Breast epithelium (tissue), 4 donors: ENCODE measurements at regions of chr9 and their contacts with region 1.

Region 1: DNA sequence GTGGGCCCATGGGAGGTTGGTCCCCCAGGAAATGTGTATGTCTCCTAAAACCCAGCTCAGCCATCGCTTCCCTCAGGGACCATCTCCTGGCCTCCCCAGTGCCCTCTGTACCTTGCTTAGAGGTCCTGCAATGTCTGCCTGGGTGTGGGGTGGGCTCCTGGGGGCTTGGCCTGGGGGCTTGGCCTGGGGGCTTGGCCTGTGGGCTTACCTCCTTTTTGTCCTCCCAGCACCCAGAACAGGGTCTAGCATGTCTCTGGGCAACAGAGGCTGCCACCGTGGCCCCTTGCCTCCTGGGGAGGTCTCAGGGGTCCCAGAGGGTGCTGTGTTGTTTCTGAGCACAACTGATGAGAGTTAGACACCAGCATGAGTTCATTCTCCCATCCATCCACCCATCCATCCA is 10.7 kb upstream of the VAV2 start:
- DNase-seq: no peak
- H3K4me3 ChIP-seq: no peak overlapping the region
- H3K27ac ChIP-seq: no peak overlapping the region
- H3K4me1 ChIP-seq: no peaks in the 10 kb centered on the region
- H3K27me3 ChIP-seq: no peaks in the 10 kb centered on the region
- CTCF ChIP-seq: no peak
- POLR2A ChIP-seq: no peak

Region 2: GRCh38 chr9:134024828-134025605 is 22.2 kb after region 1 on chr9 and contains the start of gene BRD3OS:
- intact Hi-C with region 1: no loop called
- DNase-seq: peak; percentile 94
- H3K4me3 ChIP-seq: peak within 1 kb of the TSS; percentile 72 to 99 (median 73)
- H3K27ac ChIP-seq: peak within 1 kb of the TSS; percentile 71 to 87
- H3K4me1 ChIP-seq: no peaks in the 10 kb centered on the region
- H3K27me3 ChIP-seq: no peaks in the 10 kb centered on the region
- CTCF ChIP-seq: no peak
- POLR2A ChIP-seq: no peak
- total RNA-seq, gene BRD3OS: 11.1 to 14.4 (median 11.4) TPM

Region 3: DNA sequence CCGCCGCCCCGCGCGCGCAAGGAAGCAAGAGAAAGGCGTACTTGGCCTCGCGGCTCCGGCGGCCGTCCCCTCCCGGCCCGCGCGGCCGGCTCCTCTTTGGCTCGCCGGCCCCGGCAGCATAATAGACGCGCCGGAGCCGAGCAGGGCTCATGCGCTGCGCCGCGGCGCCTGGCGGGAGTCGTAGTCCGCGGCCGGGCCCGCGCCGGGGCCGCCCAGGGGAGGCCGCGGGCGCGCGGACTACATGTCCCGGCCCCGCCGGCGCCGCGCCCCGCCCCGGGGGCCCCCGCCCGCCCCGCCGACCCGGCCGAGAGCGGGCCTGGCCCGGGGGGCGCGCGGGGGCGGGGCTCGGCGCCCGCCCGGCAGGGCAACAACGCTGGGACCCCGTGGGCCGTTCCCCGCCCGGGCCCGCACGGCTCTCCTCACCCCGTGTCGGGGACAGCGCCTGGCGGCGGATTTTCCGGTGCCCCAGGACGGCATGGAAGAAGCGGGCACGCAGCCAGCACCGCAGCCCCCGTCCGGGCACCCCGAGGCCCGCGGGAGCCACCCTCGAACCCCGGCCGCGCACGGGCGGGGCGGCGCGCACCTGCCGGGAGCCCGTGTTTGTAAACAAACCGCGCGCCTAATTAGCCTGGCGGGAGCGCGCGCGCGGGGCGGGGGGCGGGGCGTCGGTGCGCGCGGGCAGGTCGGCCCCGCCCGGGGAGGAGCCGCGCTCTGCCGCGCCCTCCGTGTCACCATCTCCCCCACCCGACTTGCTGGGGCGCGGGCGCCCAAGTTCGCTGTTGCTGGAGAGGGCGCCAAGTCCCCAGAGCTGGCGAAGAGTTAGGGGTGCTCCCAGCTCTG is 65.3 kb after region 1 on chr9 and contains the start of gene BRD3:
- intact Hi-C with region 1: loop called (anchors 2 kb)
- DNase-seq: peak; percentile 76 to 81
- H3K4me3 ChIP-seq: peak within 1 kb of the TSS; percentile 77 to 99 (median 86)
- H3K27ac ChIP-seq: peak within 1 kb of the TSS; percentile 94 to 99
- H3K4me1 ChIP-seq: peaks cover 4 to 12% of the 10 kb centered on the region in 2 donors
- H3K27me3 ChIP-seq: no peaks in the 10 kb centered on the region
- CTCF ChIP-seq: no peak
- POLR2A ChIP-seq: no peak
- total RNA-seq, gene BRD3: 21.6 to 26.2 (median 24.6) TPM

Region 4: DNA sequence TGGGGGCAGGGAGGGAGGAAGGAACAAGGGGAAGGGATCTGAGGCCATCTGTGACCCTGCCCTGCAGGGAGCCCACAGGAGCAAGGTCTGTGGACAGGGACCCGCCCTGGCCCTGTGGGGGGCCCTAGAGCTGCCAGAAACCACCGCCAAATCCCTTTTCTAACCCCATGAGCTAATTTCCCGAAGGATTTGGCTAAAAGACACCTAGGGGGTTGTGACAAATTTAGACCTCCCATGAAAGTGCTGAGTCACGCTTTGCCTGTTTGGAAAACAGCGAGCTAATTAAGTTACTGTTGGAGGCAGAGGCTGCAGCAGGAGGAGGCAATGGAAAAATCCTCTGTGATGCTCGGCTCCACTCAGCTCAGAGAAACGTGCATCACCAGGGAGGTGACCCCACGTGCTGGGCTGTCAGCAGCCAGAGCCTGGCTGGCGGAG is 1134.6 kb after region 1 on chr9:
- intact Hi-C with region 1: no loop called
- DNase-seq: no peak
- H3K4me3 ChIP-seq: no peak overlapping the region
- H3K27ac ChIP-seq: no peak overlapping the region
- H3K4me1 ChIP-seq: no peaks in the 10 kb centered on the region
- H3K27me3 ChIP-seq: peaks cover 0 to 46% of the 10 kb centered on the region in 2 donors
- CTCF ChIP-seq: no peak
- POLR2A ChIP-seq: no peak